Esophagus muscularis mucosa (tissue), 4 donors: ENCODE measurements at regions of chr7 and their contacts with region 1.

Region 1: GRCh38 chr7:143416565-143417149 is 8.0 kb upstream of the EPHA1 start:
- DNase-seq: no peak
- H3K4me3 ChIP-seq: no peak overlapping the region
- H3K27ac ChIP-seq: no peak overlapping the region
- H3K4me1 ChIP-seq: no peaks in the 10 kb centered on the region
- H3K27me3 ChIP-seq: no peaks in the 10 kb centered on the region
- CTCF ChIP-seq: peak; percentile 75 to 80 (median 78)
- EP300 ChIP-seq: no peak
- POLR2A ChIP-seq: no peak

Region 2: DNA sequence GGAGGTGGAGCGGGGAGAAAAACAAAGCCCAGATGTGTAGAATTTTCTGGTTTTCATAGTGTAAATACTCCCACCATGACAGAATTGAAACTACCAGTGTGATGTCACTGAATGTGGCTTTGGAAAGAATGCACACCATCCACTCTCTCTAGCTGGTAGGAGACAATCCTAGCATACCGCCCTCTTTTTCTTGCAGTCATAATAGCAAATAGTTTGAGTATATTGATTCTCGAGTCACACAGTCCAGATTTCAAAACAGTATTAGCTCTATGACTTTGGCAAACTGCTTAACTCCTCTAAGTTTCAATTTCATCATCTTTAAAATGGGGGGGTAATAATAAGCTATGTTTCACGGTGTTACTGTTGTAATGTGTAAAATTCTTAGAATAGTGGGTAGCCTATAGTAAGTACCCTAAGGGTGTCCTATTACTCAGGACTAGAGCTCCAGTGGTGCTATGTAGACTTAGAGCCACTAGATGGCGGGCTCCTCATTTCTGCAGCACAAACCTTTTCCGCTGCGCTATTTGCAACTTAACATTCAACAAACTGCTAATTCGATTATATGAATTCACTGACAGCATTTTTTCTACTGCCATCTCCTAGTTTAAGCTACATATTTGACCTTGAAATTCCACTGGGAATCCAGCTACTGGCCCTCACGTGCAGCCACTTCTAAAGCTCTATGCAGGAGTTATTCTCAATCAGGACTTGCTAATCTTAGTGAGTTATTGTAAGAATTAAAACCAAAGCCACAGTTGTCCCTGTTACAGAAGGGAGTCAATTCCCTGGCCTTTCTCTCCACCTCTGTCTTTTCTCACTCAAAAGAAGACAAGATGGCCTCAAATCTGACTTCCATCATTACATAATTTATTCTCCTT is 176.1 kb before region 1 on chr7:
- intact Hi-C with region 1: loop called (anchors 1 kb)
- DNase-seq: no peak
- H3K4me3 ChIP-seq: no peak overlapping the region
- H3K27ac ChIP-seq: no peak overlapping the region
- H3K4me1 ChIP-seq: peaks cover 0 to 5% (median 3%) of the 10 kb centered on the region in 4 donors
- H3K27me3 ChIP-seq: no peaks in the 10 kb centered on the region
- CTCF ChIP-seq: peak; percentile 90 to 96 (median 91)
- EP300 ChIP-seq: no peak
- POLR2A ChIP-seq: no peak

Region 3: DNA sequence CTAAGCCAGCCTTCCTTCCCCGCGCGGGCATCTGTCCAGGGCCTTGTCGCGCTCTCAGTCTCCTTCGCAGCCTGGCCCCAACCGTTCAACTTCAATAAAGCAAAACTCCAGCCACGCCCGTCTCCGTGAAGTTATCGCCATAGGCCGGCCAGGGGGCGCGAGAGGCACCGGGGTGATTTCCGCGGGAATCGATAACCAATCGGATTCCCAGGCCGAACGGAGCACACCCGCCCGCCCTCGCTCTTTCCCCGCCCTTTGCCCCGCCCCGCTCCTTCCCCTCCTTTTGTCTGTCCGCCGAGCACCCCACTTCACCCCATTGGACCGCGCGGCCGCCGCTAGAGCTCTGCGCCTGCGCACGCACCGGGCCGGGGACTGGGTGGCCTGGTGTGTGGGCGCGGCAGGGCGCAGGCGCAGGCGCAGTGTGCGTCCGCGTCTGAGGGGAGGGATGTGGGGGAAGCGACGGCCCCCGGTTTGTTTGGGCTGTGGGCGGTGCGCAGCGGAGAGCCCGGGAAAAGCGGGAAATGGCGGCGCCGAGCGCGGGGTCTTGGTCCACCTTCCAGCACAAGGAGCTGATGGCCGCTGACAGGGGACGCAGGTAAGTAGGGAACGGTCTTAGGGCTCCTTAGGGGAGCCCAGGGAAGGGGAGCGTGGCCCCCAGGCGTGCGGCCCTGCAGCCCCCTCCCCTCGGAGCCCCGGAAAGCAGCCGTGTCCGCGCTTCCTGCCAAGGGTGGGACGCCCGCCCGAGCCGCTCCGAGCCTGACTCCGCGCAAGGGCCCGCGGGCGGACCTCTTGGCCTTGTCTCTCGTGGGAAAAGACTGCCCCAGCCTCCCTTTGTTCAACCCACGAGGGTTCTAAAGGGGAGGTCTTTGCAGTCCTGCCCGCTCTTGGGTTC is 128.5 kb before region 1 on chr7 and contains the start of gene CASP2:
- intact Hi-C with region 1: no loop called
- DNase-seq: peak; percentile 99
- H3K4me3 ChIP-seq: peak within 1 kb of the TSS; percentile 81 to 97 (median 90)
- H3K27ac ChIP-seq: peak within 1 kb of the TSS; percentile 87 to 95 (median 90)
- H3K4me1 ChIP-seq: peaks cover 27 to 42% (median 34%) of the 10 kb centered on the region in 4 donors
- H3K27me3 ChIP-seq: no peaks in the 10 kb centered on the region
- CTCF ChIP-seq: peak; percentile 29 to 52 (median 30)
- EP300 ChIP-seq: no peak
- POLR2A ChIP-seq: peak; percentile 19
- total RNA-seq, gene CASP2: 7.1 to 11.7 (median 9.0) TPM

Region 4: DNA sequence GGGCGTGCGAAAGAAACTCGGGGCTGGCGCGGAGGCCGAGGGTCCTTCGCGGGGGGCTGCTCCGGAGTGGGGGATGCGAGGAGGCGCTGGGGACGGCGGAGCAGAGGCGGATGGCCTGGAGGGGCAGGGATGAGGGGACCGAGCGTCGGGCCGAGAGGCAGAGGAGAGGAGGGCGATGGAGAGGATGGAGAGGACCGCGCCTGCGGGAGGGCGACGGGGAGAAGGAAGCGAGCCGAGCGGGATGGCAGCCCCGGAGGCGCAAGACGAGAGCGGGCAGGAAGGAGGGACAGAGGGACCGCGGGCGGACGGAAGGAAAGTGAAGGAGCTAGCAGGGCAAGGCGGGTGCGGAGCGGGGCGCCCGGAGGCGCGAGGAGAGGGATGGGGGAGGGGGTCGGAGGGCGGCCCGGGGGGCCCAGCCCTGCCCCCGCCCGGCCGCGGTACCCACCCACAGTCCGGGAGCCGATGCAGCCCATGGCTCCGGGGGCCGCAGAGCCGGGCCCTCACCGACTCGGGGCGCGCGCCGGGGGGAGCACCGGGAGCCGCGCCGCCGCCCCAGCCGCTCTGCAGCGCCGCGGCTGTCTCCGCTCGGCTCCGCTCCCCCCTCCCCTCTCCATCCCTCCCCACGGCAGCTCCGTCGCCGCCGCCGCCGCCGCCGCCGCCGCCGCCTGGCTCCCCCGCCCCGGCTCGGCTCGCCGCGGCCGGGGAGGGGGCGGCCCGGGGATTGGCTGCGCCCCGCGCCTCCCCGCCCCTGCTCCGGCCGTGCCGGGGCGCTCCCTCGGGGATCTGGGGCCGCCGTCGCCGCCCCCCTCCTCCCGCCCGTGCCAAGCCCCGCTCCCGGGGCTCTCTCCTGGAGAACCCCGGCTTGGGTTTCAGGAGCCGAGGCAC is 54.3 kb before region 1 on chr7 and contains the start of gene FAM131B:
- intact Hi-C with region 1: loop called (anchors 10 kb)
- DNase-seq: no peak
- H3K4me3 ChIP-seq: peak within 1 kb of the TSS; percentile 59 to 74 (median 68)
- H3K27ac ChIP-seq: peak within 1 kb of the TSS in 1 of 4 donors; percentile 40
- H3K4me1 ChIP-seq: peaks cover 8 to 26% (median 19%) of the 10 kb centered on the region in 4 donors
- H3K27me3 ChIP-seq: peaks cover 3 to 63% (median 17%) of the 10 kb centered on the region in 4 donors
- CTCF ChIP-seq: no peak
- EP300 ChIP-seq: no peak
- POLR2A ChIP-seq: no peak
- total RNA-seq, gene FAM131B: 0.42 to 2.0 (median 1.3) TPM

Region 5: DNA sequence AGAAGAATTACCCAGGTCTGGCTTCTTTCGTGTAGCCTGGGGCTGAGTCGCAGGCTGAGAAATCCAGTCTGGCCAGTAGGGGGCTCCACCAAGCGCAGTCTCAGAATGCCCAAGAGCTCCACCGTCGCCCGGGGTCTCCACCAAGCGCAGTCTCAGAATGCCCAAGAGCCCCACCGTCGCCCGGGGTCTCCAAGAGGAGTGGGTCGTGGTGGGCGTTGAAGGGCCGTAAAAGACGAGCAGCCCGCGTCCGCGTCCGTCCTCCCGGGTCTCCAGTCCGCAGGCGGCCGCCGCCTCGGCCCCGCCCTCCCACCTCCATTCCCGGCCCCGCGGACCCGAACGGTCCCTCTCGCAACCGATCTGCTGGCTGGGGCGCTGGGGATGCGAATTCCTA is 36.4 kb before region 1 on chr7:
- intact Hi-C with region 1: loop called (anchors 1 kb)
- DNase-seq: peak; percentile 97
- H3K4me3 ChIP-seq: peak overlapping the region; percentile 74 to 99 (median 98)
- H3K27ac ChIP-seq: peak overlapping the region; percentile 100
- H3K4me1 ChIP-seq: peaks cover 41 to 66% (median 58%) of the 10 kb centered on the region in 4 donors
- H3K27me3 ChIP-seq: no peaks in the 10 kb centered on the region
- CTCF ChIP-seq: peak; percentile 85 to 92 (median 90)
- EP300 ChIP-seq: no peak
- POLR2A ChIP-seq: no peak